CD4-positive, alpha-beta memory T cell (primary cell): ENCODE measurements at regions of chr17 and their contacts with region 1.

Region 1: GRCh38 chr17:30278032-30278431 is 13.7 kb downstream of the BLMH start:
- DNase-seq: peak in 1 of 5 donors; percentile 2
- H3K4me3 ChIP-seq: no peak overlapping the region
- H3K4me3 Mint-ChIP-seq: no peak overlapping the region
- H3K27ac ChIP-seq: no peak overlapping the region
- H3K27ac Mint-ChIP-seq: no peak overlapping the region
- H3K4me1 ChIP-seq: no peaks in the 10 kb centered on the region
- H3K4me1 Mint-ChIP-seq: peaks cover 0 to 11% (median 1%) of the 10 kb centered on the region in 4 donors
- H3K27me3 ChIP-seq: no peaks in the 10 kb centered on the region
- H3K27me3 Mint-ChIP-seq: no peaks in the 10 kb centered on the region

Region 2: GRCh38 chr17:30074730-30075129 is 203.3 kb before region 1 on chr17:
- CTCF ChIA-PET with region 1: no interaction called
- POLR2A ChIA-PET with region 1: no interaction called
- intact Hi-C with region 1: no loop called
- DNase-seq: no peak
- H3K4me3 ChIP-seq: no peak overlapping the region
- H3K4me3 Mint-ChIP-seq: no peak overlapping the region
- H3K27ac ChIP-seq: no peak overlapping the region
- H3K27ac Mint-ChIP-seq: no peak overlapping the region
- H3K4me1 ChIP-seq: no peaks in the 10 kb centered on the region
- H3K4me1 Mint-ChIP-seq: no peaks in the 10 kb centered on the region
- H3K27me3 ChIP-seq: no peaks in the 10 kb centered on the region
- H3K27me3 Mint-ChIP-seq: peaks cover 4 to 6% of the 10 kb centered on the region in 2 donors

Region 3: DNA sequence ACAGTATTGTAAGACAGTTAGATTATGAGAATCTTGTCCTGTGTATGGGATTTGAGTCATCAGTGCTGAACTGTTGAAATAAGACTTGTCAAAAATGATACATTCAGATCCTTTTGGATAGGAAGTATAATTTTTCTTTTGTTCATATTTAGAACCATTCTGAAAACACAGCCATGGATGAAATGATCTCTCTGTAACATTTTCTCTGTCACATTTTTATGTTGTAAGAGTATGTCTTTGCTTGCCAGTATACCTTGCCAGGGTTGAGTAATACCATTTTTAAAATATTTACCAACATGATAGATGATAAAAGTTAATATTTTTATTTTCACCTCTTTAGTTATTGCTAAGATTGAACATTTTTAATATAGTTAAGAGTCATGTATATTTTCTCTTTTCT is 116.4 kb before region 1 on chr17:
- CTCF ChIA-PET with region 1: no interaction called
- POLR2A ChIA-PET with region 1: no interaction called
- intact Hi-C with region 1: loop called (anchors 10 kb)
- DNase-seq: no peak
- H3K4me3 ChIP-seq: no peak overlapping the region
- H3K4me3 Mint-ChIP-seq: no peak overlapping the region
- H3K27ac ChIP-seq: no peak overlapping the region
- H3K27ac Mint-ChIP-seq: no peak overlapping the region
- H3K4me1 ChIP-seq: no peaks in the 10 kb centered on the region
- H3K4me1 Mint-ChIP-seq: peaks cover 24 to 40% (median 31%) of the 10 kb centered on the region in 4 donors
- H3K27me3 ChIP-seq: no peaks in the 10 kb centered on the region
- H3K27me3 Mint-ChIP-seq: no peaks in the 10 kb centered on the region

Region 4: GRCh38 chr17:30376621-30377452 is 98.8 kb after region 1 on chr17:
- CTCF ChIA-PET with region 1: no interaction called
- POLR2A ChIA-PET with region 1: no interaction called
- intact Hi-C with region 1: no loop called
- DNase-seq: peak in 1 of 5 donors; percentile 5
- H3K4me3 ChIP-seq: no peak overlapping the region
- H3K4me3 Mint-ChIP-seq: peak overlapping the region in 7 of 8 donors; percentile 13 to 95 (median 44)
- H3K27ac ChIP-seq: no peak overlapping the region
- H3K27ac Mint-ChIP-seq: peak overlapping the region; percentile 80 to 99 (median 95)
- H3K4me1 ChIP-seq: peaks cover 44% of the 10 kb centered on the region
- H3K4me1 Mint-ChIP-seq: peaks cover 31 to 47% (median 40%) of the 10 kb centered on the region in 4 donors
- H3K27me3 ChIP-seq: no peaks in the 10 kb centered on the region
- H3K27me3 Mint-ChIP-seq: peaks cover 0 to 2% of the 10 kb centered on the region in 2 donors